Activated CD8-positive, alpha-beta T cell treated with anti-CD3 and anti-CD28 coated beads for 36 hours (primary cell): ENCODE measurements at regions of chr20 and their contacts with region 1.

Region 1: GRCh38 chr20:48769069-48769879 is 58.5 kb downstream of the PREX1 start:
- DNase-seq: peak; percentile 100
- ATAC-seq: peak; percentile 81
- H3K4me3 Mint-ChIP-seq: peak overlapping the region; percentile 55
- H3K27ac Mint-ChIP-seq: peak overlapping the region; percentile 84
- H3K4me1 Mint-ChIP-seq: peaks cover 86% of the 10 kb centered on the region
- H3K27me3 Mint-ChIP-seq: no peaks in the 10 kb centered on the region
- CTCF ChIP-seq: no peak

Region 2: GRCh38 chr20:48682529-48683251 is 86.6 kb before region 1 on chr20:
- CTCF ChIA-PET with region 1: no interaction called
- POLR2A ChIA-PET with region 1: no interaction called
- intact Hi-C with region 1: no loop called
- DNase-seq: no peak
- ATAC-seq: no peak
- H3K4me3 Mint-ChIP-seq: no peak overlapping the region
- H3K27ac Mint-ChIP-seq: no peak overlapping the region
- H3K4me1 Mint-ChIP-seq: peaks cover 13% of the 10 kb centered on the region
- H3K27me3 Mint-ChIP-seq: no peaks in the 10 kb centered on the region
- CTCF ChIP-seq: no peak

Region 3: GRCh38 chr20:48722737-48723191 is 46.5 kb before region 1 on chr20:
- CTCF ChIA-PET with region 1: no interaction called
- POLR2A ChIA-PET with region 1: interaction called, 4 read pairs
- intact Hi-C with region 1: loop called (anchors 5 kb)
- DNase-seq: peak; percentile 60
- ATAC-seq: peak; percentile 34
- H3K4me3 Mint-ChIP-seq: no peak overlapping the region
- H3K27ac Mint-ChIP-seq: peak overlapping the region; percentile 58
- H3K4me1 Mint-ChIP-seq: peaks cover 68% of the 10 kb centered on the region
- H3K27me3 Mint-ChIP-seq: no peaks in the 10 kb centered on the region
- CTCF ChIP-seq: no peak

Region 4: DNA sequence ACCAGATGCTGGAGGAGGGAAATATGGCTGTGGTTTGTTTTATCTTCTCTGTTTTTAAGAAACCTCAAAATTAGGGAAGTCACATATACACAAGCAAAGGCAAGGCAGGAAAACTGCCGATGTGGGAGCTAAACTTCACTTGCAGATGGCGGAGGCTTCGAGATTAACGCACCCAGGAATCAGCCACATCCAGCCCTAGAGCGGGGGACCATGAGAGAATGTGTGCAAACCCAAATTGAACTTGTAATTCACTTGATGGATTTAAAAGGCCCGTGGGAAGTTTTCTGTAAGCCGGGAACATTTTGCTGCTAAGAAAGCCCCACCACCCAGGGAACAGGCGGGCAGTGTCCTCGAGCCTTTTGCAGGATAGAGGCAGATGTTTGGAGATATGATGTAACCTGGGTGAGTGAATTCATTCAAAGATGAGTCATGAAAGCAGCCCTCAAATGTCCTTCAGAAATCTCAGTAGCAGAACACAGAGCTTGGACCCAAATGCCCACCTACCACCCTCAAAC is 18.6 kb after region 1 on chr20:
- CTCF ChIA-PET with region 1: no interaction called
- POLR2A ChIA-PET with region 1: interaction called, 14 read pairs
- intact Hi-C with region 1: no loop called
- DNase-seq: no peak
- ATAC-seq: peak; percentile 18
- H3K4me3 Mint-ChIP-seq: no peak overlapping the region
- H3K27ac Mint-ChIP-seq: peak overlapping the region; percentile 66
- H3K4me1 Mint-ChIP-seq: peaks cover 54% of the 10 kb centered on the region
- H3K27me3 Mint-ChIP-seq: no peaks in the 10 kb centered on the region
- CTCF ChIP-seq: no peak

Region 5: GRCh38 chr20:49006446-49006980 is 237.2 kb after region 1 on chr20:
- CTCF ChIA-PET with region 1: no interaction called
- POLR2A ChIA-PET with region 1: no interaction called
- intact Hi-C with region 1: no loop called
- DNase-seq: no peak
- ATAC-seq: no peak
- H3K4me3 Mint-ChIP-seq: no peak overlapping the region
- H3K27ac Mint-ChIP-seq: no peak overlapping the region
- H3K4me1 Mint-ChIP-seq: no peaks in the 10 kb centered on the region
- H3K27me3 Mint-ChIP-seq: no peaks in the 10 kb centered on the region
- CTCF ChIP-seq: no peak